ENCODE measurements at regions of chr7 and their contacts with region 1.

Region 1: GRCh38 chr7:152336754-152337368 is 98.9 kb downstream of the KMT2C start:
- DNase-seq: peak; percentile 50 to 63
- H3K4me3 ChIP-seq: no peak overlapping the region
- H3K4me3 Mint-ChIP-seq: no peak overlapping the region
- H3K27ac Mint-ChIP-seq: no peak overlapping the region
- H3K4me1 ChIP-seq: no peaks in the 10 kb centered on the region
- H3K4me1 Mint-ChIP-seq: peaks cover 5% of the 10 kb centered on the region
- H3K27me3 ChIP-seq: no peaks in the 10 kb centered on the region
- H3K27me3 Mint-ChIP-seq: no peaks in the 10 kb centered on the region
- CTCF ChIP-seq: peak; percentile 56 to 66

Region 2: DNA sequence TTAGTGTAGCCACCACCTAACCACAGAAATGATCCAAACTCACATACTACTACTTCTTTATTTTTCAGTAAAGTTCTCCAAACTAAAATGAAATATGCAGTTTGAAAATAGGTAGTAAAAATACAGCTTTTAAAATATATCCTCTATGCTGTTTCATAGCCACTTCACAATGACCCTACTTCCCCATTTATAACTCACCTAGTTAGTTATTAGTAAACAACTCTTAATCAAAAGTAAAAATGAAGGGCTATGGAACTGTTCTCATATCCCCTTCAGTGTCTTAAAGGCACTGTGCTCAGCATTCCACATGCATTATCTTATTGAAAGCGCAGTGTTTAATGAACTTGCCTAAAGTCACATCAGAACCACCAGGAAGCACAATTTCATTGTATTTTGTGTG is 55.4 kb after region 1 on chr7:
- CTCF ChIA-PET with region 1: interaction called, 3 read pairs
- POLR2A ChIA-PET with region 1: no interaction called
- intact Hi-C with region 1: loop called (anchors 5 kb)
- DNase-seq: no peak
- H3K4me3 ChIP-seq: no peak overlapping the region
- H3K4me3 Mint-ChIP-seq: no peak overlapping the region
- H3K27ac Mint-ChIP-seq: no peak overlapping the region
- H3K4me1 ChIP-seq: no peaks in the 10 kb centered on the region
- H3K4me1 Mint-ChIP-seq: peaks cover 14% of the 10 kb centered on the region
- H3K27me3 ChIP-seq: no peaks in the 10 kb centered on the region
- H3K27me3 Mint-ChIP-seq: no peaks in the 10 kb centered on the region
- CTCF ChIP-seq: no peak

Region 3: GRCh38 chr7:152436111-152436930 is 99.5 kb after region 1 on chr7:
- CTCF ChIA-PET with region 1: interaction called, 5 read pairs
- POLR2A ChIA-PET with region 1: no interaction called
- intact Hi-C with region 1: loop called (anchors 1 kb)
- DNase-seq: peak; percentile 94 to 98
- H3K4me3 ChIP-seq: peak overlapping the region; percentile 80
- H3K4me3 Mint-ChIP-seq: peak overlapping the region; percentile 98
- H3K27ac Mint-ChIP-seq: peak overlapping the region; percentile 82
- H3K4me1 ChIP-seq: no peaks in the 10 kb centered on the region
- H3K4me1 Mint-ChIP-seq: no peaks in the 10 kb centered on the region
- H3K27me3 ChIP-seq: no peaks in the 10 kb centered on the region
- H3K27me3 Mint-ChIP-seq: no peaks in the 10 kb centered on the region
- CTCF ChIP-seq: no peak

Region 4: DNA sequence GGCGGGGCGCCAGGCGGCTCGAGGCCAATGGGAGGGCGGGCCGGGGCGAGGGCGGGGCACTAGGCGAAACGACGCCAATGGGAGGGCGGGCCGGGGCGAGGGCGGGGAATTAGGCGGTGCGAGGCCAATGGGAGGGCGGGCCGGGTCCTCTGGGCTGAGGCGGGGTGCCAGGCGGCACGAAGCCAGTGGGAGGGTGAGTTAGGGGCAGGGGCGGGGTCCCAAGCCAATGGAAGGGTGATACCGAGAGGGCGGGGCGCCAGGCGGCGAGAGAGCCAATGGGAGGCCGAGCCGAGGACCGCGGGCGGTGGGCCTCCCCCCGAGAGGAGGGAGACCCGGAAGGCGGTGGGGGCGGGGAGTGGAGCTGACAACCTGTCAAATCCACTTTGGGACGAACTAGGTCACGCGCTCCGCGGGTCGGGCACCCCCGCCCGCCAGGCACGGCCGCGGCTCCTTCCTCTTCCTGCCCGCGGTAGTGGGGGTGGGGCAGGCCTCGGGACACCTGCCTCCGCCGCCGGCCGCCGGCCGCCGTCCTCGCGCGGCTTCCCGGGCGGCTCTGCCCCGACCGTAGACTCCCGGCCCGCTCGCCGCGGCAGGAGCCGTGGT is 126.9 kb after region 1 on chr7:
- CTCF ChIA-PET with region 1: interaction called, 5 read pairs
- POLR2A ChIA-PET with region 1: interaction called, 3 read pairs
- intact Hi-C with region 1: loop called (anchors 10 kb)
- DNase-seq: peak; percentile 100
- H3K4me3 ChIP-seq: peak overlapping the region; percentile 98
- H3K4me3 Mint-ChIP-seq: peak overlapping the region; percentile 89
- H3K27ac Mint-ChIP-seq: peak overlapping the region; percentile 86
- H3K4me1 ChIP-seq: 0 out of 2 replicates have a peak, but pooled peaks cover 5% of the 10 kb centered on the region
- H3K4me1 Mint-ChIP-seq: peaks cover 10% of the 10 kb centered on the region
- H3K27me3 ChIP-seq: no peaks in the 10 kb centered on the region
- H3K27me3 Mint-ChIP-seq: no peaks in the 10 kb centered on the region
- CTCF ChIP-seq: no peak

Region 5: GRCh38 chr7:152476551-152476950 is 139.7 kb after region 1 on chr7:
- CTCF ChIA-PET with region 1: no interaction called
- POLR2A ChIA-PET with region 1: no interaction called
- intact Hi-C with region 1: no loop called
- DNase-seq: no peak
- H3K4me3 ChIP-seq: no peak overlapping the region
- H3K4me3 Mint-ChIP-seq: no peak overlapping the region
- H3K27ac Mint-ChIP-seq: no peak overlapping the region
- H3K4me1 ChIP-seq: no peaks in the 10 kb centered on the region
- H3K4me1 Mint-ChIP-seq: peaks cover 6% of the 10 kb centered on the region
- H3K27me3 ChIP-seq: no peaks in the 10 kb centered on the region; the same call in 1 of the 2 replicates
- H3K27me3 Mint-ChIP-seq: no peaks in the 10 kb centered on the region
- CTCF ChIP-seq: no peak

Region 6: DNA sequence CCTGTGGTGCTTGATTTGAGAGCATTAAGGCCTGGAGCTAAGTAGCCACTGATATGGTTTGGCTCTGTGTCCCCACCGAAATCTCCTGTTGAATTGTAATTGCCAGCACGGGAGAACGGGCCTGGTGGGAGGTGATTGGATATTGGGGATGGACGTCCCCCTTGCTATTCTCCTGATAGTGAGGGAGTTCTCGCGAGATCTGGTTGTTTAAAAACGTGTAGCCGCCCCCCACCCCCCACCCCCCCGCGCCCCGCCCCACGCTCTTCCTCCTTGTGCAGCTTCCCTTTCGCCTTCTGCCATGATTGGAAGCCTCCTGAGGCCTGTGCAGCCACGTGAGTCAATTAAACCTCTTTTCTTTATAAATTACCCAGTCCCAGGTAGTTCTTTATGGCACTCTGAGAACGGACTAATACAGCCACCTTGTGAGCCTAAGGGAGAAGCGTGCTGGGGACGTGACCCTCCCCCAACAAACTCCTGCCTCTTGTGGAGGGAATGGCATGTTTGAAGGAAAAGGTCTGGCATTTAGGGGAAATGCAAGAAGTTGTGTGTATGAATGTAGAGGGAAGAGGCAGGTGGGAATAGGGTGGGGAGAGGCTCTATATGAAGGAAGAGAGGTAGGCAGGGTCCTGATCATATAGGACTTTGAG is 216.9 kb after region 1 on chr7:
- CTCF ChIA-PET with region 1: no interaction called
- POLR2A ChIA-PET with region 1: no interaction called
- intact Hi-C with region 1: loop called (anchors 5 kb)
- DNase-seq: no peak
- H3K4me3 ChIP-seq: no peak overlapping the region
- H3K4me3 Mint-ChIP-seq: no peak overlapping the region
- H3K27ac Mint-ChIP-seq: no peak overlapping the region
- H3K4me1 ChIP-seq: peaks cover 3% of the 10 kb centered on the region; the same call in 1 of the 2 replicates
- H3K4me1 Mint-ChIP-seq: peaks cover 21% of the 10 kb centered on the region
- H3K27me3 ChIP-seq: no peaks in the 10 kb centered on the region
- H3K27me3 Mint-ChIP-seq: no peaks in the 10 kb centered on the region
- CTCF ChIP-seq: peak in 1 of 2 experiments; percentile 22

Region 7: GRCh38 chr7:152709287-152710152 is 372.7 kb after region 1 on chr7:
- CTCF ChIA-PET with region 1: interaction called, 4 read pairs
- POLR2A ChIA-PET with region 1: no interaction called
- intact Hi-C with region 1: loop called (anchors 5 kb)
- DNase-seq: no peak
- H3K4me3 ChIP-seq: no peak overlapping the region
- H3K4me3 Mint-ChIP-seq: no peak overlapping the region
- H3K27ac Mint-ChIP-seq: no peak overlapping the region
- H3K4me1 ChIP-seq: no peaks in the 10 kb centered on the region
- H3K4me1 Mint-ChIP-seq: no peaks in the 10 kb centered on the region
- H3K27me3 ChIP-seq: no peaks in the 10 kb centered on the region
- H3K27me3 Mint-ChIP-seq: no peaks in the 10 kb centered on the region
- CTCF ChIP-seq: no peak

Measured in Caco-2 (cell line).